Activated CD4-positive, alpha-beta T cell treated with anti-CD3 and anti-CD28 coated beads for 36 hours (primary cell): ENCODE measurements at regions of chr16 and their contacts with region 1.

Region 1: DNA sequence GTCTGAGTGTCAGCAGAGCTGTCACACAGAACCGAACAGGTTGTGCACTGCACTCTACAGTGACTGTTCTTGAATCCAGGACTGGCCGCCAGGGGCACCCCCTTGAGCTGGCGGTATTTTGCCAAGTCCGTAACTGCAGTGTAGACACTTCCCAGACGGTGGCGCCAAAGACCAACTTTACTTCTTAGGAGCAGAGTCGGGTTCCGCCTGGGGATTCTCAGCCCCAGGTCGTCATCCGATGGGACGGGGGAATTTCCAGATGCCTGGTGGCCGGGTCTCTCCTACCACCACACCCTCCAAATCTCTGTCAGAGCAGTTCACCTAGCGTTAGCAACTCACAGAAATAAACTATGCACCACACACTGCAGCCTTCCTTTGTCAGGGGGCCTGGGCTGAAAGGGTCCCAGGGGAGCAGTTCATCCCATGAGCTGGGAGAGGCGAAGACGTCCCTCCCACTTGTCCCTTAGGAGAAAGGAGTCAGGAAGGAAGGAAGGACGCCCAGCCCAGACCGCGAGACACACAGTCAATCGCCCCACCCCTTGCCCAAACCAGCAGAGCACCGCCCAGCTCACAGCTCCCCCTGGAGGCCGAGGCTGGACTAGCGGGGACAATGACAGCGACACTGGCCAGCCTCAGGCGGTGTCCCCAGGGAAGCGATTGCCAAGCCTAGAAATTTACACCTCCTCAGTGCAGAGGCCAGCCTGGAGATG is 7.4 kb upstream of the RIPOR1 start:
- DNase-seq: peak; percentile 99
- ATAC-seq: peak; percentile 94
- H3K4me3 Mint-ChIP-seq: peak overlapping the region; percentile 80
- H3K27ac Mint-ChIP-seq: peak overlapping the region; percentile 97
- H3K4me1 Mint-ChIP-seq: peaks cover 10% of the 10 kb centered on the region
- H3K27me3 Mint-ChIP-seq: no peaks in the 10 kb centered on the region

Region 2: GRCh38 chr16:67428146-67428731 is 93.0 kb before region 1 on chr16:
- CTCF ChIA-PET with region 1: interaction called, 11 read pairs
- POLR2A ChIA-PET with region 1: no interaction called
- intact Hi-C with region 1: no loop called
- DNase-seq: peak; percentile 81
- ATAC-seq: peak; percentile 78
- H3K4me3 Mint-ChIP-seq: no peak overlapping the region
- H3K27ac Mint-ChIP-seq: no peak overlapping the region
- H3K4me1 Mint-ChIP-seq: peaks cover 12% of the 10 kb centered on the region
- H3K27me3 Mint-ChIP-seq: peaks cover 39% of the 10 kb centered on the region

Region 3: GRCh38 chr16:67537270-67537635 is 16.0 kb after region 1 on chr16:
- CTCF ChIA-PET with region 1: interaction called, 43 read pairs
- POLR2A ChIA-PET with region 1: interaction called, 4 read pairs
- intact Hi-C with region 1: loop called (anchors 1 to 2 kb)
- DNase-seq: peak; percentile 74
- ATAC-seq: peak; percentile 62
- H3K4me3 Mint-ChIP-seq: peak overlapping the region; percentile 73
- H3K27ac Mint-ChIP-seq: peak overlapping the region; percentile 58
- H3K4me1 Mint-ChIP-seq: peaks cover 15% of the 10 kb centered on the region
- H3K27me3 Mint-ChIP-seq: peaks cover 6% of the 10 kb centered on the region

Region 4: DNA sequence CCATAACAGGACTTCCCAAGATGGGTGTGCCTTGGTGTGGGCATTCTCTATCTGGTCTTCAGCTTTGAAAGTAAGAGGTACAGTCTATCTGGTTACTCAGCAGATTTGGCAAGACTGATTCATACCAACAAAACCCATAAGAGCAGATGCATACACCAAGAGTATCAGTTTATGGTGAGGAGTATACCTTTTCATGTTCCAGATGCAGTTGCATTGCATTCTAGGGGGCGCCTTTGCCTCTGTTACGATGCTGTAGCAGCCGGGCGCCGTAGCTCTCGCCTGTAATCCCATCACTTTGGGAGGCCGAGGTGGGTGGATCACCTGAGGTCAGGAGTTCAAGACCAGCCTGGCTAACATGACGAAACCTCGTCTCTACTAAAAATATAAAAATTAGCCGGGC is 92.6 kb after region 1 on chr16:
- CTCF ChIA-PET with region 1: interaction called, 11 read pairs
- POLR2A ChIA-PET with region 1: no interaction called
- intact Hi-C with region 1: no loop called
- DNase-seq: peak; percentile 46
- ATAC-seq: peak; percentile 60
- H3K4me3 Mint-ChIP-seq: no peak overlapping the region
- H3K27ac Mint-ChIP-seq: no peak overlapping the region
- H3K4me1 Mint-ChIP-seq: no peaks in the 10 kb centered on the region
- H3K27me3 Mint-ChIP-seq: no peaks in the 10 kb centered on the region

Region 5: GRCh38 chr16:67660564-67661028 is 139.3 kb after region 1 on chr16 and contains the start of gene PARD6A:
- CTCF ChIA-PET with region 1: interaction called, 99 read pairs
- POLR2A ChIA-PET with region 1: interaction called, 4 read pairs
- intact Hi-C with region 1: loop called in 1 of 2 experiments (anchors 1 kb)
- DNase-seq: peak; percentile 98
- ATAC-seq: peak; percentile 83
- H3K4me3 Mint-ChIP-seq: peak within 1 kb of the TSS; percentile 90
- H3K27ac Mint-ChIP-seq: peak within 1 kb of the TSS; percentile 91
- H3K4me1 Mint-ChIP-seq: peaks cover 21% of the 10 kb centered on the region
- H3K27me3 Mint-ChIP-seq: no peaks in the 10 kb centered on the region
- total RNA-seq, gene PARD6A: 7.8 to 8.7 TPM

Region 6: GRCh38 chr16:67806428-67807147 is 285.3 kb after region 1 on chr16 and contains the starts of genes RANBP10 and TSNAXIP1:
- CTCF ChIA-PET with region 1: interaction called, 5 read pairs
- POLR2A ChIA-PET with region 1: interaction called, 3 read pairs
- intact Hi-C with region 1: loop called (anchors 1 to 10 kb)
- DNase-seq: peak; percentile 98
- ATAC-seq: peak; percentile 96
- H3K4me3 Mint-ChIP-seq: peak within 1 kb of the TSS; percentile 91
- H3K27ac Mint-ChIP-seq: peak within 1 kb of the TSS; percentile 91
- H3K4me1 Mint-ChIP-seq: peaks cover 39% of the 10 kb centered on the region
- H3K27me3 Mint-ChIP-seq: no peaks in the 10 kb centered on the region
- total RNA-seq, gene RANBP10: 15.6 to 18.0 TPM
- total RNA-seq, gene TSNAXIP1: 0.62 to 1.1 TPM

Region 7: GRCh38 chr16:68040507-68041288 is 519.4 kb after region 1 on chr16:
- CTCF ChIA-PET with region 1: no interaction called
- POLR2A ChIA-PET with region 1: interaction called, 3 read pairs
- intact Hi-C with region 1: loop called in 1 of 2 experiments (anchors 1 kb)
- DNase-seq: peak; percentile 94
- ATAC-seq: peak; percentile 98
- H3K4me3 Mint-ChIP-seq: no peak overlapping the region
- H3K27ac Mint-ChIP-seq: peak overlapping the region; percentile 31
- H3K4me1 Mint-ChIP-seq: peaks cover 7% of the 10 kb centered on the region
- H3K27me3 Mint-ChIP-seq: no peaks in the 10 kb centered on the region